ENCODE measurements at regions of chr4 and their contacts with region 1.

Region 1: GRCh38 chr4:74117024-74117534 is 18.1 kb upstream of the CXCL2 start:
- DNase-seq: peak; percentile 99
- H3K4me3 ChIP-seq: no peak overlapping the region
- H3K27ac ChIP-seq: peak overlapping the region; percentile 91
- H3K4me1 ChIP-seq: peaks cover 18% of the 10 kb centered on the region
- H3K27me3 ChIP-seq: no peaks in the 10 kb centered on the region
- CTCF ChIP-seq: no peak
- POLR2A ChIP-seq: no peak

Region 2: GRCh38 chr4:73152893-73153292 is 964.2 kb before region 1 on chr4:
- CTCF ChIA-PET with region 1: no interaction called
- POLR2A ChIA-PET with region 1: no interaction called
- dilution Hi-C with region 1: no loop called
- intact Hi-C with region 1: no loop called
- DNase-seq: no peak
- H3K4me3 ChIP-seq: no peak overlapping the region
- H3K27ac ChIP-seq: no peak overlapping the region
- H3K4me1 ChIP-seq: no peaks in the 10 kb centered on the region
- H3K27me3 ChIP-seq: no peaks in the 10 kb centered on the region
- CTCF ChIP-seq: no peak
- POLR2A ChIP-seq: no peak

Region 3: GRCh38 chr4:74092957-74093356 is 24.1 kb before region 1 on chr4:
- CTCF ChIA-PET with region 1: interaction called, 30 read pairs
- POLR2A ChIA-PET with region 1: no interaction called
- dilution Hi-C with region 1: no loop called
- intact Hi-C with region 1: loop called (anchors 1 kb)
- DNase-seq: peak; percentile 63
- H3K4me3 ChIP-seq: no peak overlapping the region
- H3K27ac ChIP-seq: peak overlapping the region; percentile 56
- H3K4me1 ChIP-seq: peaks cover 31% of the 10 kb centered on the region
- H3K27me3 ChIP-seq: no peaks in the 10 kb centered on the region
- CTCF ChIP-seq: no peak
- POLR2A ChIP-seq: no peak

Region 4: DNA sequence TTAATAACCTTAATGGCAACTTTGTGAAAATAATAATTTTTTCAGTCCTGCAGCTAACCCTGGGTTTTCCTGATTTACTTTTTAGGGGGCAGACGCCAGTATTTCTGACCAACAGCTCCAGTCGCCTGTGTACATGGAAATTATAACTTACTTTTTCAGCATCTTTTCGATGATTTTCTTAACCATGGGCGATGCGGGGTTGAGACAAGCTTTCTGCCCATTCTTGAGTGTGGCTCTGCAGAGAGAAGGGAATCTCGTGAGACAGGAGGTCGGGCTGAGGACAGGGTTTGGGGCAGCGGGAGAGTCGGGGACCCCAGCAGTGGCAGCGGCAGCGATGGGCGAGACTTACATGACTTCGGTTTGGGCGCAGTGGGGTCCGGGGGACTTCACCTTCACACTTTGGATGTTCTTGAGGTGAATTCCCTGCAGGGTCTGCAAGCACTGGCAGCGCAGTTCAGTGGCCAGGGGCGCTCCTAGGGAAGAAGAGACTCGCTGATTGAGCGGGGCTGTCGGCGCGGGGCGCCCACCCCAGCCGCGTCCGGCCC is 18.6 kb before region 1 on chr4:
- CTCF ChIA-PET with region 1: interaction called, 30 read pairs
- POLR2A ChIA-PET with region 1: interaction called, 7 read pairs
- dilution Hi-C with region 1: no loop called
- intact Hi-C with region 1: loop called (anchors 1 kb)
- DNase-seq: peak; percentile 38
- H3K4me3 ChIP-seq: peak overlapping the region; percentile 46 to 85 (median 69)
- H3K27ac ChIP-seq: peak overlapping the region; percentile 83
- H3K4me1 ChIP-seq: peaks cover 32% of the 10 kb centered on the region
- H3K27me3 ChIP-seq: no peaks in the 10 kb centered on the region
- CTCF ChIP-seq: no peak
- POLR2A ChIP-seq: no peak

Measured in endothelial cell of umbilical vein (primary cell).